Naive thymus-derived CD4-positive, alpha-beta T cell (primary cell): ENCODE measurements at regions of chr5 and their contacts with region 1.

Region 1: DNA sequence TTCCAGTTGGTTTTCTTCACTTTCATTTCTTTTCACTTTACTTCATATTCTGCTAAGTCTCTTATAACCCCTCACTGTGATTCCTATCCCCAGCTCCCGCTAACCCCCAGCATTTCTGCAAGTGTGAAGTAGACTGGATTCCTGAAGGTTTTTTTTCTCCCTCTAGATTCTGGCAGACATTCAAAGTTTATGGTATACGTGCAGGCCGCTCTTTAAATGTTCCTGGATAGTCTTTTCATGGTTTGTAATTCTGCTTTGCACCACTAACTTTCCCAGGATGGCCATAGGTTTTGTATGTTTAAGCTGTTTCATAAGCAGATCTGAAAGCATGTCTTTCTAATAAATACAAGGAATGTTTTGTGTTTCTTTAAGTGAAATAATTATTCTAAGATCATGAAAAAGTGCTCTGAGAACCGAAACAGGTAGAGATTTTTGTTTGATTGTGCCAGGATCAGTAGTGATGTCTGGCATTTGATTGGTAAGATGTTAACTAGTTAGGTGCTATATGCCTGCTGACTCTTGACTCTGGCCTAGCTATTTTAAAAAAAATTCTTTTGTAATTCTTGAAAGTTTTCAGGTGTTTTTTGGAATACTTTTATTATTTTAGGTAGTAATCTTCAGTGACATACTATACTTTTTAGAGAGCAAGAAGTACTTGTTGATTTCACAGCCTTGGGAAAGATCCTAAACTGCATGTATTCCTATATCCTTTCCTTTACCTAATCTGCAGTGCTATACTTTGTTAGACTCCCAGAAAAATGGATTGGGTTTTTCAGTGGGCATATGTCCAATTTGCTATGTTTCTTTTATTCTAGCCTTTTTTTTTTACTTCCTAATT is 29.7 kb downstream of the CNOT6 start:
- DNase-seq: no peak
- ATAC-seq: no peak
- H3K4me3 ChIP-seq: no peak overlapping the region
- H3K4me3 Mint-ChIP-seq: peak overlapping the region in 8 of 10 donors; percentile 5 to 52 (median 31)
- H3K27ac ChIP-seq: peak overlapping the region; percentile 12
- H3K27ac Mint-ChIP-seq: peak overlapping the region in 7 of 9 donors; percentile 24 to 86 (median 47)
- H3K4me1 ChIP-seq: peaks cover 5 to 7% of the 10 kb centered on the region in 2 donors
- H3K4me1 Mint-ChIP-seq: peaks cover 45 to 82% (median 70%) of the 10 kb centered on the region in 7 donors
- H3K27me3 ChIP-seq: no peaks in the 10 kb centered on the region
- H3K27me3 Mint-ChIP-seq: no peaks in the 10 kb centered on the region

Region 2: DNA sequence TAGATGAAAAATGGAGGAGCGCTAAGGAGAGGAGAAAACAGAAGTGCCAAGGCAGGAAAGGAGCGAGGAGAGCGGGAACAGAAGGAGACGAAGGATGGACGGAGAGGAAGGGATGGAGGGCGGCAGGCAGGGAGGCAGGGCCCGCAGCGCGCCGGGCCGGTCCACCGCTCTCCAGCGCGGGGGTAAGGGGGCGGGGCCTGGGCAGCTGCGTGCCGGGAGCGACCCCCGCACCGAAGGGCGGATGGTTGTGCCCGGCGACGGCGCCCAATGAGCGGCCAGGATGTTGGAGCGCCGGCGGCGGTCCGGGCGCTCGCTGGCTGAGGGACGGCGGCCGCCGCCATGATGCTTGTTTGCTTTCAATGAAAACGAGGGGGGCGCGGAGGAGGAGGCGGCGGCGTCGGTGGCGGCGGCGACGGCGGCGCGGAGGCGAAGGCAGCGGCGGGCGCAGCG is 29.8 kb before region 1 on chr5 and contains the start of gene CNOT6:
- CTCF ChIA-PET with region 1: no interaction called
- POLR2A ChIA-PET with region 1: no interaction called
- intact Hi-C with region 1: loop called in 1 of 2 experiments (anchors 2 kb)
- DNase-seq: peak; percentile 91 to 98 (median 95)
- ATAC-seq: peak; percentile 98
- H3K4me3 ChIP-seq: peak within 1 kb of the TSS; percentile 83
- H3K4me3 Mint-ChIP-seq: peak within 1 kb of the TSS; percentile 85 to 99 (median 96)
- H3K27ac ChIP-seq: peak within 1 kb of the TSS; percentile 98
- H3K27ac Mint-ChIP-seq: peak within 1 kb of the TSS; percentile 84 to 98 (median 95)
- H3K4me1 ChIP-seq: peaks cover 10 to 27% of the 10 kb centered on the region in 2 donors
- H3K4me1 Mint-ChIP-seq: peaks cover 29 to 42% (median 35%) of the 10 kb centered on the region in 7 donors
- H3K27me3 ChIP-seq: no peaks in the 10 kb centered on the region
- H3K27me3 Mint-ChIP-seq: no peaks in the 10 kb centered on the region
- total RNA-seq, gene CNOT6: 22.8 to 41.9 (median 30.0) TPM

Region 3: GRCh38 chr5:180605554-180606214 is 81.8 kb after region 1 on chr5:
- CTCF ChIA-PET with region 1: no interaction called
- POLR2A ChIA-PET with region 1: no interaction called
- intact Hi-C with region 1: loop called in 1 of 2 experiments (anchors 1 kb)
- DNase-seq: peak in 8 of 9 donors; percentile 23 to 62 (median 52)
- ATAC-seq: peak; percentile 65
- H3K4me3 ChIP-seq: no peak overlapping the region
- H3K4me3 Mint-ChIP-seq: no peak overlapping the region
- H3K27ac ChIP-seq: no peak overlapping the region
- H3K27ac Mint-ChIP-seq: no peak overlapping the region
- H3K4me1 ChIP-seq: no peaks in the 10 kb centered on the region
- H3K4me1 Mint-ChIP-seq: peaks cover 0 to 10% (median 0%) of the 10 kb centered on the region in 7 donors
- H3K27me3 ChIP-seq: no peaks in the 10 kb centered on the region
- H3K27me3 Mint-ChIP-seq: no peaks in the 10 kb centered on the region

Region 4: DNA sequence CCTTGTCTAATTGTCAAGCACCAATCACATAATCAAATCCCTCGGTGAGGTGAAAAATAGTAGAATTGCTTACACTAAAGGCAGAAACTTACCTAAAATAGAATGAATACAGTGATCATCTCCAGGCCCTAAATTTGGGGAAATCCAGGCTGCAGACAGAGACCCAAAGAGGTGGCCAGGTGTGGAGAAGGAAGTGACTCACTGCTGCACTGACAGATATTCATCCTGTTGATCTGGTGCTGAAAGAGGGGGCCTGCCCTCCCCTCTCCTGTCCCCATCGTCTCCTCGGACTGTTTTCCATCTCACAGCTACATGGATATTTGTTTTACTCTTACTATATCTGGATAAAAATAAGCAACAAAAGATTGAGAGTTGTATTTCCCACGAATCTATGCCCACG is 200.1 kb after region 1 on chr5:
- CTCF ChIA-PET with region 1: no interaction called
- POLR2A ChIA-PET with region 1: no interaction called
- intact Hi-C with region 1: no loop called
- DNase-seq: no peak
- ATAC-seq: no peak
- H3K4me3 ChIP-seq: no peak overlapping the region
- H3K4me3 Mint-ChIP-seq: no peak overlapping the region
- H3K27ac ChIP-seq: no peak overlapping the region
- H3K27ac Mint-ChIP-seq: no peak overlapping the region
- H3K4me1 ChIP-seq: peaks cover 0 to 8% of the 10 kb centered on the region in 2 donors
- H3K4me1 Mint-ChIP-seq: peaks cover 1 to 18% (median 14%) of the 10 kb centered on the region in 7 donors
- H3K27me3 ChIP-seq: no peaks in the 10 kb centered on the region
- H3K27me3 Mint-ChIP-seq: peaks cover 0 to 25% (median 16%) of the 10 kb centered on the region in 5 donors